CD8-positive, alpha-beta T cell (primary cell): ENCODE measurements at regions of chr19 and their contacts with region 1.

Region 1: GRCh38 chr19:19459707-19460251 is 54.3 kb downstream of the GATAD2A start:
- DNase-seq: peak in 8 of 9 experiments; percentile 54 to 90 (median 74)
- ATAC-seq: peak; percentile 63
- H3K4me3 ChIP-seq: peak overlapping the region; percentile 44 to 47
- H3K4me3 Mint-ChIP-seq: peak overlapping the region; percentile 85
- H3K27ac ChIP-seq: peak overlapping the region; percentile 67 to 96
- H3K27ac Mint-ChIP-seq: peak overlapping the region; percentile 98
- H3K4me1 ChIP-seq: peaks cover 83% of the 10 kb centered on the region
- H3K4me1 Mint-ChIP-seq: peaks cover 86% of the 10 kb centered on the region
- H3K27me3 ChIP-seq: no peaks in the 10 kb centered on the region
- H3K27me3 Mint-ChIP-seq: no peaks in the 10 kb centered on the region
- CTCF ChIP-seq: no peak

Region 2: GRCh38 chr19:19420570-19421298 is 39.0 kb before region 1 on chr19:
- CTCF ChIA-PET with region 1: no interaction called
- POLR2A ChIA-PET with region 1: no interaction called
- intact Hi-C with region 1: no loop called
- DNase-seq: peak in 8 of 9 experiments; percentile 6 to 93 (median 51)
- ATAC-seq: peak; percentile 86
- H3K4me3 ChIP-seq: no peak overlapping the region
- H3K4me3 Mint-ChIP-seq: peak overlapping the region; percentile 53
- H3K27ac ChIP-seq: peak overlapping the region; percentile 24 to 74
- H3K27ac Mint-ChIP-seq: peak overlapping the region; percentile 78
- H3K4me1 ChIP-seq: peaks cover 62% of the 10 kb centered on the region
- H3K4me1 Mint-ChIP-seq: peaks cover 85% of the 10 kb centered on the region
- H3K27me3 ChIP-seq: no peaks in the 10 kb centered on the region
- H3K27me3 Mint-ChIP-seq: no peaks in the 10 kb centered on the region
- CTCF ChIP-seq: no peak

Region 3: GRCh38 chr19:19444681-19445155 is 15.1 kb before region 1 on chr19:
- CTCF ChIA-PET with region 1: interaction called, 4 read pairs
- POLR2A ChIA-PET with region 1: interaction called, 9 read pairs
- intact Hi-C with region 1: loop called in 1 of 2 experiments (anchors 2 kb)
- DNase-seq: peak in 3 of 9 experiments; percentile 37 to 58 (median 40)
- ATAC-seq: no peak
- H3K4me3 ChIP-seq: no peak overlapping the region
- H3K4me3 Mint-ChIP-seq: peak overlapping the region; percentile 50
- H3K27ac ChIP-seq: peak overlapping the region in 1 of 2 experiments; percentile 76
- H3K27ac Mint-ChIP-seq: peak overlapping the region; percentile 91
- H3K4me1 ChIP-seq: peaks cover 58% of the 10 kb centered on the region
- H3K4me1 Mint-ChIP-seq: peaks cover 80% of the 10 kb centered on the region
- H3K27me3 ChIP-seq: no peaks in the 10 kb centered on the region
- H3K27me3 Mint-ChIP-seq: no peaks in the 10 kb centered on the region
- CTCF ChIP-seq: no peak

Region 4: GRCh38 chr19:19471682-19472081 is 11.9 kb after region 1 on chr19:
- CTCF ChIA-PET with region 1: interaction called, 3 read pairs
- POLR2A ChIA-PET with region 1: interaction called, 6 read pairs
- intact Hi-C with region 1: loop called in 1 of 2 experiments (anchors 1 kb)
- DNase-seq: no peak
- ATAC-seq: no peak
- H3K4me3 ChIP-seq: no peak overlapping the region
- H3K4me3 Mint-ChIP-seq: no peak overlapping the region
- H3K27ac ChIP-seq: no peak overlapping the region
- H3K27ac Mint-ChIP-seq: peak overlapping the region; percentile 1
- H3K4me1 ChIP-seq: peaks cover 20% of the 10 kb centered on the region
- H3K4me1 Mint-ChIP-seq: peaks cover 60% of the 10 kb centered on the region
- H3K27me3 ChIP-seq: no peaks in the 10 kb centered on the region
- H3K27me3 Mint-ChIP-seq: no peaks in the 10 kb centered on the region
- CTCF ChIP-seq: no peak